ENCODE measurements at regions of chr9 and their contacts with region 1.

Region 1: GRCh38 chr9:5112646-5113284 is 72.7 kb downstream of the INSL6 start:
- DNase-seq: no peak
- ATAC-seq: no peak
- H3K4me3 ChIP-seq: no peak overlapping the region
- H3K27ac ChIP-seq: no peak overlapping the region
- H3K4me1 ChIP-seq: no peaks in the 10 kb centered on the region
- H3K27me3 ChIP-seq: no peaks in the 10 kb centered on the region
- CTCF ChIP-seq: no peak
- POLR2A ChIP-seq: no peak
- RAD21 ChIP-seq: no peak

Region 2: DNA sequence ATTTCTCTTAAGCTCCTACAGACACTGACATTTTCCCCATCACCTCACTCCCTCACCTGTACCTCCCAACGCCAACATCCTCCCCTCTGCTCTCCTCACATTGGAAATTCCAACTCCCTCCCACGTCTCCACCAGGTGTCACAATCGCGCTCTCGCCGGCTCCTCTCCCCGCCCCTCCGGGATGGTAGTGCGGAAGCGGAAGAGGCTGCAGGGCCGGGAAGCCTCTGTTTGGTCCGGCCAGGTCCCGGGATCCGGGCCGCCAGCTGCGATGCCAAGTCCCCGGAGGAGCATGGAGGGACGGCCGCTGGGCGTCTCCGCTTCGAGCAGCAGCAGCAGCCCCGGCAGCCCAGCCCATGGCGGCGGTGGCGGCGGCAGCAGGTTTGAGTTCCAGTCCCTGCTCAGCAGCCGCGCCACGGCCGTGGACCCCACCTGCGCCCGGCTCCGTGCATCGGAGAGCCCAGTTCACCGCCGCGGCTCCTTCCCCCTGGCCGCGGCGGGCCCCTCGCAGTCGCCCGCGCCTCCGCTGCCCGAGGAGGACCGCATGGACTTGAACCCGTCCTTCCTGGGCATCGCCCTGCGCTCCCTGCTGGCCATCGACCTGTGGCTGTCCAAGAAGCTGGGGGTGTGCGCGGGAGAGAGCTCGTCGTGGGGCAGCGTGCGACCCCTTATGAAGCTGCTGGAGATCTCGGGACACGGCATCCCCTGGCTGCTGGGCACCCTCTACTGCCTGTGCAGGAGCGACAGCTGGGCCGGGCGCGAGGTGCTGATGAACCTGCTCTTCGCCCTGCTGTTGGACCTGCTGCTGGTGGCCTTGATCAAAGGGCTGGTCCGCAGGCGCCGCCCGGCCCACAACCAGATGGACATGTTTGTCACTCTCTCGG is 450.4 kb before region 1 on chr9 and contains the start of gene PLPP6:
- CTCF ChIA-PET with region 1: no interaction called
- POLR2A ChIA-PET with region 1: no interaction called
- dilution Hi-C with region 1: no loop called
- in situ Hi-C with region 1: no loop called
- intact Hi-C with region 1: no loop called
- DNase-seq: peak; percentile 75
- ATAC-seq: peak; percentile 88
- H3K4me3 ChIP-seq: peak within 1 kb of the TSS; percentile 91
- H3K27ac ChIP-seq: peak within 1 kb of the TSS; percentile 85
- H3K4me1 ChIP-seq: peaks cover 9% of the 10 kb centered on the region
- H3K27me3 ChIP-seq: no peaks in the 10 kb centered on the region
- CTCF ChIP-seq: peak; percentile 54
- POLR2A ChIP-seq: peak; percentile 56; the same call in 1 of the 2 replicates
- RAD21 ChIP-seq: peak; percentile 42
- total RNA-seq, gene PLPP6: 3.3 and 3.4 TPM in 2 replicates

Region 3: DNA sequence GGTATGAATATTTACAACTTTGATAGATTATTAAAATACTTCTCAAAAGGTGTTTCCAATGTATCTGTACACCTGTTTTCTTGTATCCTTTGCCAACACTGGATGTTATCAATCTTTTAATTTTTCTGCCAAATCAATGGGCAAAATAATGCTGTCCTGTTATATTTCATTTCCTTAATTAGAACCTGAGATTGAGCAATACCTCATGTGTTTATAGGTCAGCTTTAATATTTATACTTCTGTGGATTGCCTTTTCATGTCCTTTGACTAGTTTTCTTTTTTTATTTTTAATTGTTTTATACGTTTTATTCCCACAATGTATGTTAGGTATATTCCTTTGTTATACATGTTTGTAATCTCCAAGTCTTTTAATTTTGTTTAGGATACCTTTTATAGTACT is 50.1 kb before region 1 on chr9:
- CTCF ChIA-PET with region 1: no interaction called
- POLR2A ChIA-PET with region 1: interaction called, 13 read pairs
- dilution Hi-C with region 1: no loop called
- in situ Hi-C with region 1: no loop called
- intact Hi-C with region 1: no loop called
- DNase-seq: no peak
- ATAC-seq: no peak
- H3K4me3 ChIP-seq: no peak overlapping the region
- H3K27ac ChIP-seq: no peak overlapping the region
- H3K4me1 ChIP-seq: no peaks in the 10 kb centered on the region
- H3K27me3 ChIP-seq: no peaks in the 10 kb centered on the region
- CTCF ChIP-seq: no peak
- POLR2A ChIP-seq: no peak
- RAD21 ChIP-seq: no peak

Region 4: GRCh38 chr9:5437254-5438216 is 324.8 kb after region 1 on chr9 and contains the start of gene PLGRKT:
- CTCF ChIA-PET with region 1: no interaction called
- POLR2A ChIA-PET with region 1: no interaction called
- dilution Hi-C with region 1: no loop called
- in situ Hi-C with region 1: no loop called
- intact Hi-C with region 1: no loop called
- DNase-seq: peak; percentile 87
- ATAC-seq: peak; percentile 98
- H3K4me3 ChIP-seq: peak within 1 kb of the TSS; percentile 75
- H3K27ac ChIP-seq: peak within 1 kb of the TSS; percentile 70
- H3K4me1 ChIP-seq: peaks cover 5% of the 10 kb centered on the region
- H3K27me3 ChIP-seq: no peaks in the 10 kb centered on the region
- CTCF ChIP-seq: peak; percentile 29; the same call in 1 of the 2 replicates
- POLR2A ChIP-seq: peak; percentile 81
- RAD21 ChIP-seq: peak; percentile 27
- total RNA-seq, gene PLGRKT: 12.7 and 13.6 TPM in 2 replicates